ENCODE measurements at regions of chr4 and their contacts with region 1.

Region 1: DNA sequence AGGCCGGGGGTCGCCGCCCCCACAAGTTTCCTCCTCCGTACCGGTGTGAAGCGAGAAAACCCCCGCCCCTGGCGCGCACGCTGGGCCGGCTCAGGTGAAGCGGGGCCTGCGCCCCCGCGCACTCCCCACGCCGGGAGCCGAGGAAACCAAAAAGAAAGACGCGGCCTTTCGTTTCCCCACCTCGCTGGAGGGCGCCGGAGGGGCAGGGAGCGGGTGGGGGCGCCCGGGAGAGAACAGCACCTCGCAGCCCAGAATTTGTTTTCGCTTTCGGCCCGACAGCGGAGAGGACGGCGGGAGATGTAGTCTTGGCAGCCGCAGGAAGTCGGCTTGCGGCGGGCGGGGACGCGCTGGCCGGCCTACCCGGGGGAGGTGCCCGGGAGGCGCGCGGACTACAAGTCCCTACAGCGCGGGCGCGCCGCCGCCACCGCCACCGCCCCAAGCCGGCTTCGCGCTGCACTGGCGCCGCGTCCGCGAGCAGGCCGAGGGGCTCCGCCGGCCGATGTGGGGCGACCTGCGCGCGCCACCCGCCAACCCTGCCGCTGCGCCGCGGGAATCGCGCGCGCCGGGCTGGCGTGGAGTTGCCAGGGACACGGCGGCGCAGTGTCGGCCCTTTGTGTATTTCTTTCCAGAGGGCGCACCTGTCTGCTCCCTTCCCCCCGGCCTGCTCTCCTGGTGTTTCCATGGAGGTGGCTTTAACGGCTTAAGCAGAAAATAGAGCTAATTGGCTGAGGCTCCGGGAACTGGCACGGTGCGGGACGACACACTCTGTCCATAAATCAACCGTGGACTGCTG is at the start of gene OTUD4:
- DNase-seq: peak; percentile 95
- H3K4me3 Mint-ChIP-seq: peak within 1 kb of the TSS; percentile 99
- H3K27ac Mint-ChIP-seq: peak within 1 kb of the TSS; percentile 99
- H3K4me1 Mint-ChIP-seq: peaks cover 29% of the 10 kb centered on the region
- H3K27me3 Mint-ChIP-seq: peaks cover 2% of the 10 kb centered on the region
- total RNA-seq, gene OTUD4: 76.9 and 80.9 TPM in 2 replicates

Region 2: GRCh38 chr4:143513306-143514168 is 1667.0 kb before region 1 on chr4 and contains the start of gene SMARCA5:
- intact Hi-C with region 1: loop called (anchors 1 kb)
- DNase-seq: peak; percentile 95
- H3K4me3 Mint-ChIP-seq: peak within 1 kb of the TSS; percentile 94
- H3K27ac Mint-ChIP-seq: peak within 1 kb of the TSS; percentile 93
- H3K4me1 Mint-ChIP-seq: peaks cover 29% of the 10 kb centered on the region
- H3K27me3 Mint-ChIP-seq: peaks cover 10% of the 10 kb centered on the region
- total RNA-seq, gene SMARCA5: 59.9 and 60.7 TPM in 2 replicates

Region 3: GRCh38 chr4:145097821-145098674 is 82.4 kb before region 1 on chr4 and contains the starts of genes ABCE1 and ANAPC10:
- intact Hi-C with region 1: loop called (anchors 1 kb)
- DNase-seq: peak; percentile 94
- H3K4me3 Mint-ChIP-seq: peak within 1 kb of the TSS; percentile 92
- H3K27ac Mint-ChIP-seq: peak within 1 kb of the TSS; percentile 100
- H3K4me1 Mint-ChIP-seq: peaks cover 27% of the 10 kb centered on the region
- H3K27me3 Mint-ChIP-seq: no peaks in the 10 kb centered on the region
- total RNA-seq, gene ABCE1: 155 and 176 TPM in 2 replicates
- total RNA-seq, gene ANAPC10: 25.4 and 32.1 TPM in 2 replicates

Region 4: DNA sequence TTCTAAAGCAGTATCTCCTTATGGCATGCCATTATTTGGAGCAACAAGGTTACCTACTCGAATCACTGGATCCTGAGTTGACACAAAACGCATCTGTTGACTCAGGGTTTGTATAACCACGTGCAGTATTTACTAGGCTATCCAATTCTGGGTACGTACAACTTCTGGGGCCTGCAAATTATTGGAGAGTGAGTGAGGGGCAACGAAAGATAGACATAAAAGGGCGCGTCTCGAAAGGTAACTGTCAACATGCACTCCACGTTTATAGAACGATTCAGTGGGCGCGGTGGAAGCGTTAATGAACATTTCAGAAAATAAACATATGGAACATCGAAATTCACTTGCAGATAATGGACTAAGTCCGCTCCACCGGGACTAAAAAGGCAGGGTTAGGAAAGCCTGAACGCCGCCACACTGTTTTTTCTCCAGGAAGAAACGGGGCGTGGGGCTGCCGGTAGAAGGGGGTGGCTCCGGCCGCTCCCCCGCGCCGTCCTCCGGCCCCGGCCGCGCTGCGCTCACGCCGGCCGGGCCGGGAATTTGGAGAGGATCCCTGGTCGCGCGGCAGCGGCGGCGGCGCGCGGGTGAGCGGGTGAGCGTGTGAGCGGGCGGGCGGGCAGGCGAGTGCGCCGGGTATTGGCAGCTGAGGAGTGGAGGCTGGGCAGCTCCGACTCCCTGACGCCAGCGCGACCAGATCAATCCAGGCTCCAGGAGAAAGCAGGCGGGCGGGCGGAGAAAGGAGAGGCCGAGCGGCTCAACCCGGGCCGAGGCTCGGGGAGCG is 300.9 kb after region 1 on chr4 and contains the start of gene SMAD1:
- intact Hi-C with region 1: loop called (anchors 1 kb)
- DNase-seq: peak; percentile 11
- H3K4me3 Mint-ChIP-seq: peak within 1 kb of the TSS; percentile 73
- H3K27ac Mint-ChIP-seq: peak within 1 kb of the TSS; percentile 49
- H3K4me1 Mint-ChIP-seq: peaks cover 6% of the 10 kb centered on the region
- H3K27me3 Mint-ChIP-seq: peaks cover 33% of the 10 kb centered on the region
- total RNA-seq, gene SMAD1: 3.1 and 3.2 TPM in 2 replicates

Region 5: GRCh38 chr4:145618932-145619638 is 438.6 kb after region 1 on chr4 and contains the start of gene MMAA:
- intact Hi-C with region 1: loop called (anchors 1 kb)
- DNase-seq: peak; percentile 95
- H3K4me3 Mint-ChIP-seq: peak within 1 kb of the TSS; percentile 97
- H3K27ac Mint-ChIP-seq: peak within 1 kb of the TSS; percentile 99
- H3K4me1 Mint-ChIP-seq: peaks cover 49% of the 10 kb centered on the region
- H3K27me3 Mint-ChIP-seq: peaks cover 2% of the 10 kb centered on the region
- total RNA-seq, gene MMAA: 18.1 and 20.8 TPM in 2 replicates

Region 6: DNA sequence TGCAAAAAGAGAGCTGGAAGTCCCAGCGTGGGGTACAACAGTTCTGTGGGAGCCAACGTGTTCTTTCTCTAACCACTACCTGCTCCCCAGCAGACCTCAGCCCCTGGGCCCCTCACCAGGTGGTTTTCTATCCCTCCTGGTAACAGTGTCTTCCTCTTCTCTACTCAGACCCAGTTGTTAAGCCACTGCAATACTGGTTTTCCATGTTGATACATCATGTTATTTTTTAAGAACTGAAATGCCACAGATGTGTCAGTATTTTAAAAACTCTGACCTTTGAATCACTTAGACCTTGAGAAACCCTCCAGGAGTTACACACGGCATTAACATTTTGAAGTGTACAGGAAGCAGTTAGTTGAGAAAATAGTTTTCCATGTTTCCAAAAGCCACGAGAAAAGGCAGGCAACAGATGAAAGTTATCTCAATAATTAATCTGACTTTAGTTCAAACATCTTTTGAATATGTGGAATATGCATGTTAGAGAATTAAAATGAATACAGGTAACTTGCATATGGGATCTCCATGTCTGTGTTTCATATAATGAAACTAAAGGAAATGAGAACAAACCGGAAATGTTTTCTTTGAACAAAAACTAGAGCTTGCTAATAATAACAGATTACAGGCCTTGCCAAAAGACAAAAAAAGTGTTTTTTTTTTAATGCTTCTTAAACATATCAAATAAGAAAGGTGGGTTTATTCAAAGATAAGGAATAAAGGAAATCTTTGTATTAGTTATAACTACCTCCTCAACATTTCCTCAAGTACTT is 649.3 kb after region 1 on chr4:
- intact Hi-C with region 1: loop called (anchors 2 kb)
- DNase-seq: no peak
- H3K4me3 Mint-ChIP-seq: peak overlapping the region; percentile 63
- H3K27ac Mint-ChIP-seq: peak overlapping the region; percentile 91
- H3K4me1 Mint-ChIP-seq: peaks cover 61% of the 10 kb centered on the region
- H3K27me3 Mint-ChIP-seq: no peaks in the 10 kb centered on the region

Region 7: DNA sequence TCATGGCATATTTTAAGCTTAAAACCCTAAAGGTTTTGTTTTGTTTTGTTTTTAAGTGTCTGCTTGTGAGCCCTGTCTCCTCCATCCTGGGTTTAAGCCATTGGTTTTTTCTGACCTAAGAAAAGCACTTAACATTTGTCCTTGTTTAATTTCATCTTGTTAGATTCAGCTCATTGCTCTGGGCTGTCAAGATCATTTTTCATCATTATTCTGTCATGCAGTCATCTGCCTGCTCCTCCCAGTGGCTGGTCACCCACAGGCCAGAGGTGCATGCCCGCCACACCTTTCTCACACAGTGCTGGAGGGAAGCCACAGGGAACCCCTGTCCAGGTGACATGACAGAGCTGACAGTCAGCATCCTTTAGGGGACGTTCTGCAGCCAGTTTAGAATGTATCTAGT is 1022.2 kb after region 1 on chr4:
- intact Hi-C with region 1: no loop called
- DNase-seq: no peak
- H3K4me3 Mint-ChIP-seq: no peak overlapping the region
- H3K27ac Mint-ChIP-seq: no peak overlapping the region
- H3K4me1 Mint-ChIP-seq: no peaks in the 10 kb centered on the region
- H3K27me3 Mint-ChIP-seq: peaks cover 2% of the 10 kb centered on the region

Region 8: DNA sequence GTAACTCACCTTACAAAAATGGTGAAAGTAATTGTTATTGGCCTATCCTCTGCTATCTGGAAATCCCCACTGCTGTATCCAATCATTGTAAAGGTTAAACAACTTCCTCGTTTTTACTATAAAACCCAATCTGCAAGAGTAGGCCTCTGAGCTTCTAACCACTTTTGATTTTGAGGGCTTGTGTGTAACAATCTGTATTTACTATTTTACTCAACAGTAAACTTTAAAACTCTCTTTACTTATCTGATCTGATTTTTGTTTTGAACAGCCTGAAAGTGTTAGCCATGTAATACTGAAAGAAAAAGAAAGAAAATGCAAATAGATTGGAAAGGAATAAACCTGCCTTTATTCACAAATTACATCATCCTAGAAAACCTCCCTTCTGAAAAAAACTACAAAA is 1278.1 kb after region 1 on chr4:
- intact Hi-C with region 1: loop called (anchors 2 kb)
- DNase-seq: no peak
- H3K4me3 Mint-ChIP-seq: peak overlapping the region; percentile 63
- H3K27ac Mint-ChIP-seq: peak overlapping the region; percentile 88
- H3K4me1 Mint-ChIP-seq: peaks cover 26% of the 10 kb centered on the region
- H3K27me3 Mint-ChIP-seq: no peaks in the 10 kb centered on the region